HepG2 (cell line): ENCODE measurements at regions of chr16 and their contacts with region 1.

Region 1: DNA sequence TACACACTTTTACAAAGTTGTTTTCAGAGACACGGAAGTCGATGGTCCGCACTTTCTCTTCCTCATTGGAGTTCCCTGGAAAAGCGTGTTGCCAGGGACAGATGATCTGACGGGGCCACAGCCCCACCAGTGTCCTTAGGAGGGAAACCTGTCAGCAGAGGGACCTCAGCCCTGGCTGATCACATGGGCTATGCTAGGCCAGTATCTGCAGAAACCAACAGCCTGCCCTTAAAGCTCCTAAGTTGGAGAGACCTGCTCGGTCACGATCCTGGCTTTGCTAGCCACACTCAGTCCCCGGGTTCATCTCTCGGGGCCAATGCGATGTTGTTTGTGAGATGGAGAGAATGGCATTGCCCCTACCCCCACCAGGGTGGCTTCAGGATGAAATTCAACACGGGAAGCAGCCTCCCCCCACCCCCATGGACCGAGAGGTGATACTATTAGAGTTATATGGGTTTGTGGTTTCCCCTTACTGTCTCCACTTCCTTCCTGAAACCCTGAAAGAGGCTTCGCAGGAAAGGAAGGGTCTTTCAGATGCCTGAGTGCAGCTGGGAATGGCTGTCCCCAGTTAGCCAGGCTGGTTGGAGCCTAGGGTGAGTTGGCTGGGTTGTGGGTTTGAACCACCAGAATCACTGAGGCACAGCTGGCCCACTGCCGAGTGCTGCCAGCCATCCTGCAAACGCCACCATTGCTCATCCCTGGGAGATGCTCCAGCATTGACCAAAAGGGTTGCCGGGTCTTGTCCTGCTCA is 16.6 kb downstream of the RMI2 start:
- DNase-seq: no peak
- ATAC-seq: no peak
- H3K4me3 ChIP-seq: no peak overlapping the region
- H3K27ac ChIP-seq: no peak overlapping the region
- H3K4me1 ChIP-seq: peaks cover 88% of the 10 kb centered on the region
- H3K27me3 ChIP-seq: no peaks in the 10 kb centered on the region
- CTCF ChIP-seq: no peak
- EP300 ChIP-seq: no peak
- POLR2A ChIP-seq: no peak
- RAD21 ChIP-seq: no peak

Region 2: DNA sequence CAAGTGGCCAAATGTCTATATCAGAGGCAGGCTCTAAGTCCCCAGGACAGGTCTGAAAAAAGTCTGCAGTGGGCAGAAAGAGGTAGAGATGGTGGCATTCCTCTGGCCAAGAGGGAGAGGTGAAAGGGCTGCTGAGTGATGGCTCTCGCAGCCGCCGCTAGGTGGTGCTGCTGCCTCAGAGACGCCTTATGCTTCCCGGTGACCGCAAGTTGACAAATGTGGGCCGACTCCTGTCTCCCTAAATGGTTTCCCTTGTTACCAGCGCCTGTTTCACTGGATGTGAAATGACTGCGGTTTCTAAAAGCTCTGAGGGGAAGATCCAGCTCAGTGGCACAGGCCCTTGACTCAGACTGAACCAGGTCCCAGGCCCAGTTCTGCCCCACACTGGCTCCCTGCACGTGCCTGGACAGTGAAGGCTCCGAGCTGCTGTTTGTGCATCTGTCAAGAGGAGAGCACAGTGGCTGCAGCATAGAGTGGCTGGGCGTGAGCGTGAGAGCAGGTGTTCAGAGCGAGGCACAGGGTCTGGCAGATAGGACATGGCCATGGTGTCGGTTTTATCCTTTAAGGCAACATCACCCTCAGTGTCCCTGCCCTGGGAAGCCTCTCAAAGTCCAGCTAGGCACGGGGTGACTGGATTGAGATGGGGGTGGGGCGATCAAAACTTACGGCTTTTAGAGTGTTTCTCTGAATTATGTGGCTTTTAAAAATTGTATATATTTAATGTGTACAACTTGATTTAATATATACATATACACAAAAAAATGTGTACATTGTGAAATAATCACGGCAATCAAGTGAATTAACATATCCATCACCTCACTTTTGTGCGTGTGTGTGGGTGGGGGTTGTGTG is 397.6 kb before region 1 on chr16:
- CTCF ChIA-PET with region 1: interaction called, 27 read pairs
- POLR2A ChIA-PET with region 1: no interaction called
- in situ Hi-C with region 1: loop called (anchors 10 kb)
- intact Hi-C with region 1: no loop called
- DNase-seq: peak; percentile 74
- ATAC-seq: peak; percentile 96
- H3K4me3 ChIP-seq: no peak overlapping the region
- H3K27ac ChIP-seq: no peak overlapping the region
- H3K4me1 ChIP-seq: peaks cover 14% of the 10 kb centered on the region
- H3K27me3 ChIP-seq: no peaks in the 10 kb centered on the region
- CTCF ChIP-seq: peak; percentile 99
- EP300 ChIP-seq: peak in 1 of 2 experiments; percentile 52; a peak in 1 of 4 replicates
- POLR2A ChIP-seq: no peak
- RAD21 ChIP-seq: peak; percentile 97

Region 3: DNA sequence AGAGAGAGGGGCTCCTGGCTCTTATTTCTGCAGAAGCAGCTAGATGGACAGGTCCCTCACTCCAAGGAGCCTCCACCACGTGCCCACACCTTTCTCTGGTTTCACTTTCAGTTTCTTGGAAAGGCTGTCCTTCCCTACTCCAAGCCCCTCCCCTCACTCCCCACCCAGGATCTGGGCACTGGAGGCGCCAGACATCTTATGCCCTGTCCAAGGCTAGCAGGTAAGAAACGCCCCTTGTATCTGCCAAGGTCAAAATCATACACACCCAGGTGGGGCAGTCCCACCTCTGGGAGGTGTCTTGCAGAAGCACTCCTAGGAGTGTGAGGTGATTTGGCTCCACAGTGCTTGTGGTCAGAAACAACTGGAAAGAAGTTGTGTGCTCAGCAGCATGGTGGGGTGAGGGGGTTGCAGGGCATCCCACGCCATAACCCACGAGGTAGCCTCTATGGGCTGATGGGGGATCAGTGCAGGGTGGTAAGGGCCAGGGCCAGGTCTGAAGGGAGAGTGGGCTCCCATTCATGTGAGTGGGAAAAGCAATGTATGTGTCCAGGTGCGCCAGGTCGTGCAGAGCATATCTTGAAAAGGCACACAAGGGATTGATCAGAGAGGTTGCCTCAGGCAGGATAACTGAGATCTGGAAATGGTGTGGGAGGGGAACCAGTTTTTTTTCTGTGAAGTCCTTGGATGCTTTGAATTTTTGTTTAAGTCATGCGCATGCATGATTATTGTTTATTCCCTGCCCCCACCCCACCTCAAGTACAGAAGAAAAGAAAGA is 49.0 kb before region 1 on chr16:
- CTCF ChIA-PET with region 1: no interaction called
- POLR2A ChIA-PET with region 1: interaction called, 8 read pairs
- in situ Hi-C with region 1: no loop called
- intact Hi-C with region 1: loop called (anchors 1 kb)
- DNase-seq: peak; percentile 72
- ATAC-seq: no peak
- H3K4me3 ChIP-seq: peak overlapping the region; percentile 4 to 49 (median 34); a peak in 4 of 6 replicates
- H3K27ac ChIP-seq: peak overlapping the region; percentile 88
- H3K4me1 ChIP-seq: peaks cover 73% of the 10 kb centered on the region
- H3K27me3 ChIP-seq: no peaks in the 10 kb centered on the region
- CTCF ChIP-seq: no peak; the same call in 1 of the 2 replicates
- EP300 ChIP-seq: 0 out of 4 replicates have a peak, but pooled peaks of 1 of the 2 experiments have one; percentile 18
- POLR2A ChIP-seq: peak; percentile 11 to 46
- RAD21 ChIP-seq: no peak

Region 4: GRCh38 chr16:11459722-11460121 is 97.8 kb after region 1 on chr16:
- CTCF ChIA-PET with region 1: no interaction called
- POLR2A ChIA-PET with region 1: no interaction called
- in situ Hi-C with region 1: no loop called
- intact Hi-C with region 1: no loop called
- DNase-seq: no peak
- ATAC-seq: peak; percentile 9; the same call in 1 of the 3 replicates
- H3K4me3 ChIP-seq: no peak overlapping the region
- H3K27ac ChIP-seq: no peak overlapping the region
- H3K4me1 ChIP-seq: peaks cover 5% of the 10 kb centered on the region; the same call in 1 of the 2 replicates
- H3K27me3 ChIP-seq: peaks cover 6 to 30% of the 10 kb centered on the region in 2 experiments
- CTCF ChIP-seq: no peak
- EP300 ChIP-seq: no peak
- POLR2A ChIP-seq: no peak
- RAD21 ChIP-seq: no peak